Caco-2 (cell line): ENCODE measurements at regions of chr2 and their contacts with region 1.

Region 1: GRCh38 chr2:174697255-174697654 is 67.0 kb downstream of the CHRNA1 start:
- DNase-seq: peak; percentile 71 to 77
- H3K4me3 ChIP-seq: no peak overlapping the region
- H3K4me3 Mint-ChIP-seq: no peak overlapping the region
- H3K27ac Mint-ChIP-seq: no peak overlapping the region
- H3K4me1 ChIP-seq: peaks cover 6% of the 10 kb centered on the region; the same call in 1 of the 2 replicates
- H3K4me1 Mint-ChIP-seq: peaks cover 6% of the 10 kb centered on the region
- H3K27me3 ChIP-seq: no peaks in the 10 kb centered on the region
- H3K27me3 Mint-ChIP-seq: no peaks in the 10 kb centered on the region
- CTCF ChIP-seq: peak; percentile 71 to 93

Region 2: DNA sequence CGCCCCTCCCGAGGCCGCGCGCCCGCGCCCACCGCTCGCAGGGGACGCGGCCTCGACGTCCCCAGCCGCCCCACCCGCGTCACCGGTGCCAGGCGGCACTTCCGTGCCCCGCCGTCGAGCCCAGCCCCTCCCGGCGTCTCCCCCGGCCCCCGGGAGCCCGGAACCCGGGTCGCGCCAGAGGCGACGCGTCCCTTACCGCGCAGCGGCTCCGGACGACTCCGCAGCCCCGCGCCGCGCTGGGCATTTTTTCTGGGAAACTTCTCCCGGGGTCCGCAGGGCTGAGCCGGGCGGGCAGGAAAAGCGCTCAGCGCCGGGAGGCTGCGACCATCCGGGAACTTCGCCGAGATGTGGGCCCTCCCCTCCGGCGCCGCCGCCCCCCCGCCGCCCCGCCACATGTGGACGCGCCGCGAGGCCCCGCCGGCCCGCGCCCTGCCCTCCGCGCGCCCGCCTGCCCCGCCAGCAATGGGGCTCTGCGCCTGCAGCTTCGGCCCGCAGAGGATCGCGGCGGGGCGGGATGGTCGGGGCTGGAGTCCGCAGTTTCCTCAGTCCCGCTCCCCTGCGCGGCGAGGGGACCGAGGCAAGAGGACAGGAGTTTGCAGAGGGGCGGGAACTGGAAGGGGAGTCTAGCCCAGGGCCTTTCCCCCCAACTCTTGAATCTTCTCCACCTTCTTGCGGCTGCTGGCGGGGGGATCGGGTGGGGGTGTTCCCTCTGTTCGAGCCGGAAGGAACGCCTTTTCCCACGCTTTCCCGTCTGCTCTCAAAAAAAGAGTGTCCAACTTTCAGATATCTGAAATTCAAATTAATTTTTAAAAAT is 14.5 kb before region 1 on chr2:
- CTCF ChIA-PET with region 1: interaction called, 10 read pairs
- POLR2A ChIA-PET with region 1: no interaction called
- intact Hi-C with region 1: no loop called
- DNase-seq: peak in 1 of 2 experiments; percentile 58
- H3K4me3 ChIP-seq: peak overlapping the region; percentile 60
- H3K4me3 Mint-ChIP-seq: peak overlapping the region; percentile 85
- H3K27ac Mint-ChIP-seq: peak overlapping the region; percentile 40
- H3K4me1 ChIP-seq: 0 out of 2 replicates have a peak, but pooled peaks cover 11% of the 10 kb centered on the region
- H3K4me1 Mint-ChIP-seq: peaks cover 15% of the 10 kb centered on the region
- H3K27me3 ChIP-seq: no peaks in the 10 kb centered on the region; the same call in 1 of the 2 replicates
- H3K27me3 Mint-ChIP-seq: peaks cover 9% of the 10 kb centered on the region
- CTCF ChIP-seq: no peak

Region 3: GRCh38 chr2:174748948-174749347 is 51.7 kb after region 1 on chr2:
- CTCF ChIA-PET with region 1: interaction called, 20 read pairs
- POLR2A ChIA-PET with region 1: no interaction called
- intact Hi-C with region 1: loop called (anchors 2 kb)
- DNase-seq: peak; percentile 81 to 84
- H3K4me3 ChIP-seq: no peak overlapping the region
- H3K4me3 Mint-ChIP-seq: no peak overlapping the region
- H3K27ac Mint-ChIP-seq: peak overlapping the region; percentile 63
- H3K4me1 ChIP-seq: peaks cover 8% of the 10 kb centered on the region
- H3K4me1 Mint-ChIP-seq: no peaks in the 10 kb centered on the region
- H3K27me3 ChIP-seq: no peaks in the 10 kb centered on the region
- H3K27me3 Mint-ChIP-seq: no peaks in the 10 kb centered on the region
- CTCF ChIP-seq: peak; percentile 82 to 86

Region 4: DNA sequence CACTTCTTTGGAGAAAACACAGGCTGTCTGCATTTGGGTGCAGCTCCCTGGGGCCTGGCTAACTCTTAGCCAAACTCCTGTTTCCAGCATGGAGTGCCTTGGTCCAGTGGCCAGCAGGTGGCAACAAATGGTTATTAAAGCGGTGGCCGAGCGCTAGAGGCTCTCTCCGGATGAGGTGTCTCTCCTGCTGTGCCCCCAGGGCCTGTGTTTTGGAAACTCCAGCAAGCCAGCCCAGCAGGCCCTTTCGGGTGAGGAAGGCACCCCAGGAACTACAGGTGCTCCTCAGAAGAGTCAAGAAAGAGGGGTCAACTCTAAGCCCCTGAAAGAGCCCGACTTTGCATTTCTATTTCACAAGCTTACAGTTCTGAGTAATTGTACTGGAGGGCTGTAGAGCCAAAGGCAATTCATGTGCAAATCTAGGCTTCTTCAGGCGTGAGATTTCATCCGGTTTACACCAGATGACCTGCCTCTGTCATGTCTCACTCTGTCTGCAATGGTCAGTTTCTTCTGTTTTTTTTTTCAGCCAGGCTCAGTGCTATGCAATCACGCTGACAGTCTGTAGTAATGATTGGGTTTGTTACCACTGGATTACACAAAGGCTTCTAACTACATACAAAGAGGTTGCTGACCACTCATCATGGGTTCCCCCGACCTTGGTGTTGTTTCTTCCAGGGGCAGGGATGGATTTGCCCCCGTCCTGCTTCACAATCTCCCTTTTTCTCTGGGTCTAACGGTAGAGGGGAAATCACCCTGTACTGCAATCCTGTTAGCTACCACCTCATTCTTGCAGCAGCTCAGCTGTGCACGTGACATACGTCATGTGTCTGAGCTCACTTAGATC is 74.6 kb after region 1 on chr2:
- CTCF ChIA-PET with region 1: interaction called, 11 read pairs
- POLR2A ChIA-PET with region 1: no interaction called
- intact Hi-C with region 1: no loop called
- DNase-seq: peak; percentile 74 to 78
- H3K4me3 ChIP-seq: no peak overlapping the region
- H3K4me3 Mint-ChIP-seq: no peak overlapping the region
- H3K27ac Mint-ChIP-seq: no peak overlapping the region
- H3K4me1 ChIP-seq: peaks cover 5% of the 10 kb centered on the region; the same call in 1 of the 2 replicates
- H3K4me1 Mint-ChIP-seq: no peaks in the 10 kb centered on the region
- H3K27me3 ChIP-seq: no peaks in the 10 kb centered on the region
- H3K27me3 Mint-ChIP-seq: no peaks in the 10 kb centered on the region
- CTCF ChIP-seq: peak; percentile 85 to 92

Region 5: GRCh38 chr2:174985630-174986029 is 288.4 kb after region 1 on chr2:
- CTCF ChIA-PET with region 1: interaction called, 5 read pairs
- POLR2A ChIA-PET with region 1: no interaction called
- intact Hi-C with region 1: loop called (anchors 1 kb)
- DNase-seq: no peak
- H3K4me3 ChIP-seq: no peak overlapping the region
- H3K4me3 Mint-ChIP-seq: no peak overlapping the region
- H3K27ac Mint-ChIP-seq: no peak overlapping the region
- H3K4me1 ChIP-seq: no peaks in the 10 kb centered on the region
- H3K4me1 Mint-ChIP-seq: no peaks in the 10 kb centered on the region
- H3K27me3 ChIP-seq: no peaks in the 10 kb centered on the region
- H3K27me3 Mint-ChIP-seq: peaks cover 2% of the 10 kb centered on the region
- CTCF ChIP-seq: peak; percentile 54